ENCODE measurements at regions of chr10 and their contacts with region 1.

Region 1: GRCh38 chr10:76547352-76547972 is 1090.1 kb downstream of the KCNMA1 start:
- DNase-seq: peak; percentile 94
- H3K4me3 ChIP-seq: peak overlapping the region in 1 of 2 donors; percentile 15
- H3K27ac ChIP-seq: no peak overlapping the region
- H3K4me1 ChIP-seq: no peaks in the 10 kb centered on the region
- H3K27me3 ChIP-seq: no peaks in the 10 kb centered on the region
- CTCF ChIP-seq: peak; percentile 80 to 86 (median 83)
- POLR2A ChIP-seq: no peak

Region 2: DNA sequence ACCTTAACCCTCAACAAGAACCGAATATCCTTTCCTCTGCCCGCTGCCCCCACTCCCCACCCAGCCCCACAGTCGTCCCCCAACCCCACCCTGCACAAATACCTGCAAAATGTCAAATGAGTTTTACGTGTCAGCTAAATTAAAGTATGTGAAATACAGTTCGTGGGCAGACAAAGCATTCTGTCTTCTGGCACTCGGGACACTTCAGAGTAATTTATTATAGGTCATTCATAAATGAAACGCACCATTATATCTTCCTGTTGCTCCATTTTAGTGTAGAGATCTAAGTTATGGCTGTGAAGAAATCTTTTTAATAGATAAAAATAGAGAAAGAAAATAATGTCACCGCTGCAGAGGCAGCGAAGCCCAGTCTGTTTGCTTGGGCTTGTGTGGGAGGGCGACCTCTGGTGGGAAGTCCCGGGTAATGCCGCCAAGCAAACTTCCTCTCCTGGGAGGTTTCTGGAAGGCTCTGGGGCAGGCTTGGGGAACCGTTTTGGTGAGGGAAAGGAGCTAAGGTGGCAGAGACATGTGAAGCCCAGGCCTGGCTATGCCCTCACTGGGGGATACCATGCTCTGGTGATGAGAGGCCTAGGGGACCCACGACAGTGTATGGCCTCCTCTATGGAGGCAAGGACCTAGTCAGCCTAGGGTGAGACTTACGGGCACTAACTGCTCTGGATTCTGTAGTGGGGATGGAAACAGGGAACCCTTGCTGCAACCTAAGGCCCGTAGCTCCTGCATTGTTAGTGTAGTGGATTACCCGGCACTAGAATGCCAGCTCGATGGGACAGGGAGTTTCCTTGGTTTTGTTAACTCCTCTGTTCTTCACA is 511.1 kb before region 1 on chr10:
- intact Hi-C with region 1: loop called (anchors 10 kb)
- DNase-seq: peak; percentile 86
- H3K4me3 ChIP-seq: no peak overlapping the region
- H3K27ac ChIP-seq: no peak overlapping the region
- H3K4me1 ChIP-seq: no peaks in the 10 kb centered on the region
- H3K27me3 ChIP-seq: no peaks in the 10 kb centered on the region
- CTCF ChIP-seq: peak; percentile 77 to 90 (median 88)
- POLR2A ChIP-seq: no peak

Measured in testis (tissue), 5 donors.